A549 (cell line): ENCODE measurements at regions of chr19 and their contacts with region 1.

Region 1: GRCh38 chr19:46788262-46788967 is at the start of gene SLC1A5:
- DNase-seq: peak; percentile 99
- ATAC-seq: peak; percentile 51 to 77
- H3K4me3 ChIP-seq: peak within 1 kb of the TSS; percentile 66
- H3K27ac ChIP-seq: peak within 1 kb of the TSS; percentile 96 to 97
- H3K4me1 ChIP-seq: peaks cover 40% of the 10 kb centered on the region
- CTCF ChIP-seq: peak; percentile 4; the same call in 1 of the 3 replicates
- EP300 ChIP-seq: 0 out of 5 replicates have a peak, but pooled peaks of 1 of the 2 experiments have one; percentile 13
- POLR2A ChIP-seq: peak; percentile 100
- RAD21 ChIP-seq: peak; percentile 20 to 28; a peak in 3 of 5 replicates
- polyA plus RNA-seq, gene SLC1A5: 302 and 306 TPM in 2 replicates

Region 2: GRCh38 chr19:46753420-46754155 is 34.8 kb before region 1 on chr19:
- CTCF ChIA-PET with region 1: interaction called, 21 read pairs
- POLR2A ChIA-PET with region 1: interaction called, 10 read pairs
- DNase-seq: peak; percentile 64 to 79
- ATAC-seq: peak; percentile 22 to 45; a peak in 3 of 6 replicates
- H3K4me3 ChIP-seq: no peak overlapping the region
- H3K27ac ChIP-seq: no peak overlapping the region
- H3K4me1 ChIP-seq: peaks cover 4% of the 10 kb centered on the region; the same call in 1 of the 3 replicates
- CTCF ChIP-seq: peak; percentile 65
- EP300 ChIP-seq: no peak
- POLR2A ChIP-seq: no peak
- RAD21 ChIP-seq: peak in 1 of 2 experiments; percentile 46; a peak in 1 of 5 replicates

Region 3: DNA sequence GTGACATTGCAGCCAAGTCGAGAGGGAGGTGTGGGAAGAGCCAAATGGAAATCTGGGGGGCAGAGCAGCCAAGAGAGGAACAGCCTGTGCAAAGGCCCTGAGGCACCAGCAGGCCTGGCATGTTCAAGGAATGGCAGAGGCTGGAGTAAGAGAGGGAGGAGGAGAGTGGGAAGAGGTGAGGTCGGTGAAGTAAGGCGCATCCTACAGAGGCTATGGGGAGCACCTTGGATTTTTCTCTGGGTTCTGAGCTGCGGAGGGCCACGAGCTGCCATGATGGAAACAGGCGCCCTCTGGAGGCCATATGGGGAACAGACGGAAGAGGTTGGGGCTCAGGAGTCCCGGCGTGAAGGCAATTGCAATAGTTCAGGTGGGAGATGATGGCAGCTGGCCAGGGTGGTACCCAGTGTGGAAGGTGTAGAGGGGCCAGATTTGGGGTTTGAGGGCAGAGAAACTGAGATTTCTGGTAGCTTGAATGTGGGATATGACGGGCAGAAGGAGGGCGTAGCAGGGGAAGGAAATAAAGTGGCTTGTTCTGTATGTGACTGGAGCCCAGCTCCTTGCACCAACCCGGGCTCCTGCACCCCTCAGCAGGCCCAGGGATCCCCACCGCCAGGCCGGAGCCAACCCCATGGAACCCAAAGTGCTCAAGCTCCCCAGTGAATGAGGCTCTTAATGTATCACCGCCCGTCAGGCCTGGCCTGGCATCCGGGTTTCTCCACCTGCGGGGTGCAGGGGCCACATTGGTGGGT is 21.7 kb before region 1 on chr19:
- CTCF ChIA-PET with region 1: interaction called, 159 read pairs
- POLR2A ChIA-PET with region 1: interaction called, 10 read pairs
- DNase-seq: peak in 1 of 2 experiments; percentile 75
- ATAC-seq: peak; percentile 79 to 84
- H3K4me3 ChIP-seq: no peak overlapping the region
- H3K27ac ChIP-seq: no peak overlapping the region
- H3K4me1 ChIP-seq: peaks cover 21% of the 10 kb centered on the region; the same call in 2 of the 3 replicates
- CTCF ChIP-seq: peak; percentile 87
- EP300 ChIP-seq: no peak
- POLR2A ChIP-seq: no peak
- RAD21 ChIP-seq: peak; percentile 38 to 59; a peak in 4 of 5 replicates

Region 4: DNA sequence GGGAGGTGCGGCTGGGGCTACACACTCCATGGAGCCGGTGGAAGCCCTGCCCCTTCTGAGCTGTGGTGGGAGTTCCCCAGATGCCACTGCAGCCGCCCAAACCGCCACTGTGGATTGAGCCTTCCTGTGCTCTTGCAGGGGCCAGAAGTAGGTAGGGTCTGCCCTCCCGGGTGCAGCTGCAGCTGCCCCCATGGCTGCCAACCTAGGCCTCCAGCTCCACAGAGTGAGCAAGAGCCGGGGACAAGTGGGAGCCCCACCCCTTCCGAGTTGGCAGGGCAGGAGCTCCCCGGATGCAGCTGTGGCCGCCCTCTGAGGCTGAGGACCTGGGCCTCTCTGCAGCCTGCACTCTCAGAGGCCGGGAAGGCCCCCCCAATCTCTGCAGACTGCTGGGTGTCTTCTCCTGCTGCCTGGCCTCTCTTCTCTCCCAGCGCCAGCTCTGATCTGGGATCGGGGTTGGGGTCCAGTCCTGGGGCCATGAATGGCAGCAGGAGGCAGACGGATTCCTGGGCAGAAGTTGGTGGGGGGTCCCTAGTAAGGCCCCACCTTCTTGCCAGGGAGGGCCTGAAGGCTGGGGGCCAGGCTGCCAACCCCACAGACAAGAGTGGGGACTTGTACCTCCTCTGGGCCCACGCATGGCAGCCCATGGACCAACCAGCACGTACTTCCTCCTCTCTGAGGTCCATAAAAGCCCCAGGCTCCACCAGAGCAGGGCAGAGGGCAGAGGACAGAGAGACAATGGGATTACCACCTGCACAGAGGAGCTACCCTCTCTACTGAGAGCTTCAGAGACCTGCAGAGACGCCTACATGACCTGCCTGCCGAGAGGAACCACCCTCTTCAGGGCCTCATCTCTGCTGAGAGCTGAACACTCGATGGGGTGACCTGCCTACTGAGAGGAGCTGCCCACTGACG is 33.3 kb after region 1 on chr19:
- CTCF ChIA-PET with region 1: interaction called, 10 read pairs
- POLR2A ChIA-PET with region 1: interaction called, 4 read pairs
- DNase-seq: no peak
- ATAC-seq: peak; percentile 11 to 32; a peak in 3 of 6 replicates
- H3K4me3 ChIP-seq: no peak overlapping the region
- H3K27ac ChIP-seq: peak overlapping the region in 1 of 2 experiments; percentile 15; a peak in 1 of 6 replicates
- H3K4me1 ChIP-seq: no peaks in the 10 kb centered on the region
- CTCF ChIP-seq: no peak
- EP300 ChIP-seq: no peak
- POLR2A ChIP-seq: no peak
- RAD21 ChIP-seq: no peak

Region 5: GRCh38 chr19:46834121-46834520 is 45.7 kb after region 1 on chr19:
- CTCF ChIA-PET with region 1: interaction called, 130 read pairs
- POLR2A ChIA-PET with region 1: interaction called, 78 read pairs
- DNase-seq: no peak
- ATAC-seq: no peak
- H3K4me3 ChIP-seq: no peak overlapping the region
- H3K27ac ChIP-seq: no peak overlapping the region
- H3K4me1 ChIP-seq: peaks cover 8% of the 10 kb centered on the region
- CTCF ChIP-seq: no peak
- EP300 ChIP-seq: no peak
- POLR2A ChIP-seq: no peak
- RAD21 ChIP-seq: no peak